Activated CD4-positive, alpha-beta T cell treated with anti-CD3 and anti-CD28 coated beads for 36 hours (primary cell): ENCODE measurements at regions of chrX and their contacts with region 1.

Region 1: GRCh38 chrX:110401140-110401539 is 42.5 kb downstream of the RTL9 start:
- DNase-seq: no peak
- ATAC-seq: no peak
- H3K4me3 Mint-ChIP-seq: no peak overlapping the region
- H3K27ac Mint-ChIP-seq: no peak overlapping the region
- H3K4me1 Mint-ChIP-seq: no peaks in the 10 kb centered on the region
- H3K27me3 Mint-ChIP-seq: peaks cover 2% of the 10 kb centered on the region

Region 2: DNA sequence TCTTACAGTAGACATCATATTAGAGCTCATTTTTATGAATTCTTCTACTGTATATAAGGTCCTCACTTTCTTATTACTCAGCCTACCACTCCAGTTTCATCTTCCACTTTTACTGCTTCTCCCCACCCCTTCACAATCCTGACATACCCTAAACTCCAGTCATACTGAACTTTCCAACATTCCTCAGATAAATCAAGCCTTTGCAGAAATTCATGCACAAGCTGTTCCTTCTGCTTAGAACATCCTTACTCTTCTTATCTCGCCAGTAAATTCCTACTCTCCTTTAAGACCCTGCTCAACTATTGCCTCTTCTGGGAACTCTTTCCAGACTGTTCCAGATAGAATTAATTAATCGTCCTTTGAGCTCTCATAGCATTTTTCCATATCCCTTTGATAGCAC is 17.7 kb before region 1 on chrX:
- CTCF ChIA-PET with region 1: no interaction called
- POLR2A ChIA-PET with region 1: no interaction called
- intact Hi-C with region 1: loop called in 1 of 2 experiments (anchors 1 kb)
- DNase-seq: no peak
- ATAC-seq: no peak
- H3K4me3 Mint-ChIP-seq: no peak overlapping the region
- H3K27ac Mint-ChIP-seq: no peak overlapping the region
- H3K4me1 Mint-ChIP-seq: no peaks in the 10 kb centered on the region
- H3K27me3 Mint-ChIP-seq: no peaks in the 10 kb centered on the region

Region 3: DNA sequence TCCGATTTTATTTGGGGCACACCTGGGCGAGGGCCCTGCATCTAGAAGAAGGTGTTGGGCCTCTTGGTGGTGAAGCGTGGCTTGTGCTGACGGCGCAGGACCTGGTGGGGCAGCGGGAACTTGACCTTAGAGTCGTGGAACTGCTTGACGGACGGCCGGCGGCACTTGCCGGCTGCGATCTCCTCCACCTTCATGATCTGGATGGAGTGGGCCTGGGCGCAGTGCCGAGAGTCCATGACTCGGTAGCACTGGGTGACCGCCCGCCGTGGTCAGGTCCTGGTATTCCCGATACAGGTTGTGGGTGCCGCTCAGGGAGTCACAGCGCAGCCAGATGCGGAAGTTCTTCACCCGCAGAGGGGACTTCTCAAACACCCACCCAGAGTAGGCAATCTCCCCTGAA is 1223.0 kb after region 1 on chrX:
- CTCF ChIA-PET with region 1: no interaction called
- POLR2A ChIA-PET with region 1: no interaction called
- intact Hi-C with region 1: no loop called
- DNase-seq: no peak
- ATAC-seq: no peak
- H3K4me3 Mint-ChIP-seq: no peak overlapping the region
- H3K27ac Mint-ChIP-seq: no peak overlapping the region
- H3K4me1 Mint-ChIP-seq: no peaks in the 10 kb centered on the region
- H3K27me3 Mint-ChIP-seq: peaks cover 3% of the 10 kb centered on the region